CD4-positive, alpha-beta T cell (primary cell): ENCODE measurements at regions of chr7 and their contacts with region 1.

Region 1: DNA sequence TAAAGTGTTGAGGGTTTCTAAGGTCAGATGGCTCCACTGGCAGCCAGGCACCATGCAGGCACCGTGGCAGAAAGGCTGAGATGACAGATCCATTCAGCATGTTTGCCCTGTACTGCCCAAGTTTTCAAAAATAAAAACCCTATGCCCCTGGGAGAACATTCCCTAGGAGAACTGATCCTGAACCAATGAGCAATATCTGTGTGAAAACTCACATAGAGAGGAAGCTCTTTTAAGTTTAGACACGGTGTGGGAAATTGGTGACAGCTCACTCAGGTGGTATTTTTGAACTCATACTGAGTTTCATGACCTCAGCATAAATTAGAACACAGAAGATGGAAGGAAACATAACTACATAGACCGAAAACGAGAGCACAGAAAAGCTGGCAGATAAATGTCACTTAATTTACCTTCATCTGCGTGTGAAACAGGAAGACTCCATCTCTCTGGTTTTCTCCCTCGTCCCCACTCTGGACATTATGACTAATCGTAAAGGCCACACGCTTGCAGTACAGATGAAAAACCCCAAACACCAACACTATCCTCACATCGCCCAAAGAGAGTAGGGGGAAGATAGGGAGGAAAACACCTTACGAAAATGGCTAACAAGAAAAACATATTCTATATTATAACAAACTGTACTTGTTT is 127.8 kb downstream of the ICA1 start:
- DNase-seq: peak in 4 of 14 experiments; percentile 34 to 73 (median 64)
- ATAC-seq: peak; percentile 33
- H3K4me3 ChIP-seq: no peak overlapping the region
- H3K4me3 Mint-ChIP-seq: peak overlapping the region; percentile 25
- H3K27ac ChIP-seq: peak overlapping the region; percentile 36 to 79
- H3K27ac Mint-ChIP-seq: peak overlapping the region; percentile 96
- H3K4me1 ChIP-seq: peaks cover 56% of the 10 kb centered on the region
- H3K4me1 Mint-ChIP-seq: peaks cover 79% of the 10 kb centered on the region
- H3K27me3 ChIP-seq: no peaks in the 10 kb centered on the region
- H3K27me3 Mint-ChIP-seq: no peaks in the 10 kb centered on the region
- CTCF ChIP-seq: no peak

Region 2: GRCh38 chr7:8149222-8149621 is 15.0 kb after region 1 on chr7:
- CTCF ChIA-PET with region 1: no interaction called
- POLR2A ChIA-PET with region 1: interaction called, 21 read pairs
- intact Hi-C with region 1: loop called in 1 of 2 experiments (anchors 2 kb)
- DNase-seq: peak in 2 of 14 experiments; percentile 32 to 69
- ATAC-seq: peak; percentile 69
- H3K4me3 ChIP-seq: peak overlapping the region; percentile 3
- H3K4me3 Mint-ChIP-seq: peak overlapping the region; percentile 43
- H3K27ac ChIP-seq: peak overlapping the region in 1 of 2 donors; percentile 19
- H3K27ac Mint-ChIP-seq: peak overlapping the region; percentile 90
- H3K4me1 ChIP-seq: peaks cover 38% of the 10 kb centered on the region
- H3K4me1 Mint-ChIP-seq: peaks cover 85% of the 10 kb centered on the region
- H3K27me3 ChIP-seq: no peaks in the 10 kb centered on the region
- H3K27me3 Mint-ChIP-seq: no peaks in the 10 kb centered on the region
- CTCF ChIP-seq: no peak

Region 3: GRCh38 chr7:8176370-8177081 is 42.3 kb after region 1 on chr7:
- CTCF ChIA-PET with region 1: no interaction called
- POLR2A ChIA-PET with region 1: no interaction called
- intact Hi-C with region 1: loop called in 1 of 2 experiments (anchors 1 kb)
- DNase-seq: peak; percentile 47 to 87 (median 64)
- ATAC-seq: peak; percentile 93
- H3K4me3 ChIP-seq: peak overlapping the region; percentile 22
- H3K4me3 Mint-ChIP-seq: peak overlapping the region; percentile 72
- H3K27ac ChIP-seq: peak overlapping the region; percentile 82 to 88
- H3K27ac Mint-ChIP-seq: peak overlapping the region; percentile 96
- H3K4me1 ChIP-seq: peaks cover 42% of the 10 kb centered on the region
- H3K4me1 Mint-ChIP-seq: peaks cover 60% of the 10 kb centered on the region
- H3K27me3 ChIP-seq: no peaks in the 10 kb centered on the region
- H3K27me3 Mint-ChIP-seq: no peaks in the 10 kb centered on the region
- CTCF ChIP-seq: no peak